Left colon (tissue), 2 donors: ENCODE measurements at regions of chr1 and their contacts with region 1.

Region 1: GRCh38 chr1:89632657-89633247 is at the start of gene LRRC8C:
- DNase-seq: peak; percentile 66 to 84
- ATAC-seq: peak; percentile 94
- total RNA-seq, gene LRRC8C: 1.8 to 3.2 TPM

Region 2: GRCh38 chr1:89762779-89763648 is 130.3 kb after region 1 on chr1:
- intact Hi-C with region 1: loop called (anchors 10 kb)
- DNase-seq: peak; percentile 78 to 88
- ATAC-seq: peak; percentile 98